Lower leg skin (tissue), 4 donors: ENCODE measurements at regions of chr17 and their contacts with region 1.

Region 1: DNA sequence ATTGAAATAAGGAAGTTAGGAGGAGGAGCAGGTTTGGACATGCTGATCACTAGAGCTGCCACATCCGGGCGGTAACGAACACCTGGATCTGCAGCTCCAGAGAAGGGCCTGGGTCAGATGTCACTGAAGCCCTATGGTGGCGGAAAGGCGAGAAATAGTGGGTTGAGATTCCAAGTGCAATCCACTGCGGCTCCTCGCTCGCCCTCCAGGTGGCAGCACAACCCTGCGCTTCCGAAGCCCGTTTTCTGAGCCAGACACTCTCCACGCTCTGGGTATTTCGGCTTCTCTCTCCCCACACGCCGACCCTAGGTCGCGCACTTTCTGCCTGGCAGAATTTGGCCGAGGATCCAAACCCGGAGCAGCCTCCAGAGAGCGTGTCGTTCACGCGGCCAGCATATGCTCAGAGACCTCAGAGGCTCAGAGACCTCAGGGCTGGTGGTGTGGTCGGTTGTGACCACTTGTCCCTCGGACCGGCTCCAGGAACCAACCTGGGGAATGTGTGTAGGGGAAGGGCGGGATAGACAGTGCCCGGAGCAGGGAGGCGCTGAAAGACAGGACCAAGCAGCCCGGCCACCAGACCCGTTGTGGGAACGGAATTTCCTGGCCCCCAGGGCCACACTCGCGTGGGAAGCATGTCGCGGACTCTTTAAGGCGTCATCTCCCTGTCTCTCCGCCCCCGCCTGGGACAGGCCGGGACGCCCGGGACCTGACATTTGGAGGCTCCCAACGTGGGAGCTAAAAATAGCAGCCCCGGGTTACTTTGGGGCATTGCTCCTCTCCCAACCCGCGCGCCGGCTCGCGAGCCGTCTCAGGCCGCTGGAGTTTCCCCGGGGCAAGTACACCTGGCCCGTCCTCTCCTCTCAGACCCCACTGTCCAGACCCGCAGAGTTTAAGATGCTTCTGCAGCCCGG is 744 bp upstream of the SLC2A4 start:
- DNase-seq: peak; percentile 69 to 96
- H3K4me3 ChIP-seq: peak overlapping the region; percentile 6
- CTCF ChIP-seq: peak in 1 of 3 donors; percentile 98
- POLR2A ChIP-seq: no peak

Region 2: DNA sequence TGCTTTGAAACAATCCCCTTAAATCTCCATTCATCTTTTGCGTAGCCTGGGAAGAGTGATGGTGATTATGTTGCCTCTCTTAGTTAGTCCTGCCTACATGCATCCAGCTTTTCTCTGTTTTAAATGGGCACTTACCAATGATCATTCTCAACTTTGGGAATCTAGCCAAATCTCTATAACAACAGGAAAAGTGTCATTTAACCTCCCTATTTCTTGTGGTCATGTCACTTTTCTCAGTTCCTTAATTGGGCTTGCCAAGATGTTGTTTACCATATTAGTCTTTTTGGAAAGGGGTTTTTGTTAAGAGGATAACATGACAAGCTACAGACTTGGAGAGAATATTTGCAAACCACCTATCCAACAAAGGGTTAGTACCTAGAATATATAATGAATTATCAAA is 185.1 kb before region 1 on chr17:
- intact Hi-C with region 1: no loop called
- DNase-seq: no peak
- H3K4me3 ChIP-seq: no peak overlapping the region
- CTCF ChIP-seq: no peak
- POLR2A ChIP-seq: no peak

Region 3: GRCh38 chr17:7343250-7343649 is 62.5 kb after region 1 on chr17:
- intact Hi-C with region 1: loop called (anchors 2 kb)
- DNase-seq: no peak
- H3K4me3 ChIP-seq: no peak overlapping the region
- CTCF ChIP-seq: no peak
- POLR2A ChIP-seq: no peak